ENCODE measurements at regions of chr11 and their contacts with region 1.

Region 1: GRCh38 chr11:113289431-113290187 is 24.8 kb upstream of the TTC12 start:
- DNase-seq: peak; percentile 67
- ATAC-seq: peak; percentile 89

Region 2: DNA sequence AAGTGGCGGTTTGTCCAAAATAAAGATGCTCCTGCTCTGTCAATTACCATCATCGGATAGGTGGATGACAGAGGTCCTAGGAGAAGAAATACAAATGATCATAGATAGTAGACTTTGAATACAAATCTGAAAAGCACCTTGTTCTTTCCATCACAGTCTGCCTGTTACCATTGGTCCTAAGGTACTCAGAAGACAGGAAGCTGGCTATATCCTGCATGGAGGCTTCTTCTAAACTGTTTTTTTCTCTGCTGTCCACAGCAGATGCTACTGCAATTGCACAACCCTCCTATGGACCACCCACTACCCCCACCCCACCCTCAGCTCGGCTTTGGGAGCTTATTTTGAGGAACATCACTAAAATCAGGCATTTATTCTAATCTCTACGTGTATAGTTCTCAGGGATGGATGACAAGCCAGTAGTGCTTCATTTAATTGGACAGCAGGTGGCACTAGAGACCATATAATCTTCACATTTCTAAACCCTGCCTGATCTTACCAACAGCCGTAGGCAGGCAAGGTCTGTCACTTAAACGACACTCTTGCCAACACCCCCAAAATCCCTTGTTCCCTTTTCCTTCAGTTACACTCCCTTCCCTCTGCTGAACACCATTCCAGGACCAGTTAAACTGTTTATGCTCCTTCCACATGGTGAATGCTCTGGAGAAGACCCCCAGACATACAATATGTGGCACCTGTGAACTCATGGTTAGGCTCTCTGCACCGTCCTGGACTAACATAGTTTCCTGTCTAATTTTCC is 1070.0 kb before region 1 on chr11:
- intact Hi-C with region 1: loop called (anchors 10 kb)
- DNase-seq: no peak
- ATAC-seq: peak; percentile 95

Region 3: DNA sequence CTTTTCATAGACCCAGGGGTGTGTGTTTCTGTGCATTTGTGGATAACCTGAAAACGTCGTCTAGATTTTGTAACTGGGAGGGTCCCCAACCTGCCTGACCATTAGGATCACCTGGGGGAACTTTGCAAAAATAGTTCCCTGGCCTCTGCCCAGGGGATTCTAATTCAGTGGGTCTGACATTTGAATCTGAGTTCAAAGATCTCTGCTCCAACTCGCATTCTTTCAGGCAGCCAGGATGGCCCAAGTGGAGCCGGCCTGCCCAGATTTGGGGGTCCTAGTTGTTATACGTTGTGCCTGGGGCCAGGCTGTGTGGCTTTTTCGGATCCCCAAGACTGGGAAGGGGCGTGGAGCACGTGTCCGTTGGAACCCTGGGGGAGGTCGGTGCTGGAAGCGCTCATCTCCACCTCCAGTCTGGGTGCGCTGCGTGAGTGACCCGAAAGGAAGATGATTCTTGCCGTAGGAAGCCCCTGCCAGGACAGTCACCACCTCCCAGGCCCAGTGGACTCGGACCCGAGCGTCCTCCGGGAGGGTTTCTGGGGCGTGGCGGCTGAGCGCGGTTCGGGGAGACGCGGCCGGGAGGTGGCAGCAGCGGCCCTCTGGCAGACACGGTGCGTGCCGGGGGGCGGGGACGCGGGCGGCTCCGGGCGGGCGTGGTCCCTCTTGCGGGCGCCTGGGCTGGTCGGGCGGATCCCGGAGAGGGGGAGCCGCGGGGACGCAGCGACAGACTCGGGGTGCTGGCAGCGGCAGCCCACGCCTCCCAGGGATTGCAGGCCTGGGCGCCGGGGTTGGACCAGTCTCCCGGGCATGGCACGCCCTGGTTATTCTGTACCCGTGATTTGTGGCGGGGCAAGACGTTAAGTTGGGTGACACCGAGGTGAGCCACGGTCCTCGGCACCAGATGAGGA is 999.8 kb before region 1 on chr11:
- intact Hi-C with region 1: loop called (anchors 5 kb)
- DNase-seq: peak; percentile 92
- ATAC-seq: peak; percentile 92

Region 4: DNA sequence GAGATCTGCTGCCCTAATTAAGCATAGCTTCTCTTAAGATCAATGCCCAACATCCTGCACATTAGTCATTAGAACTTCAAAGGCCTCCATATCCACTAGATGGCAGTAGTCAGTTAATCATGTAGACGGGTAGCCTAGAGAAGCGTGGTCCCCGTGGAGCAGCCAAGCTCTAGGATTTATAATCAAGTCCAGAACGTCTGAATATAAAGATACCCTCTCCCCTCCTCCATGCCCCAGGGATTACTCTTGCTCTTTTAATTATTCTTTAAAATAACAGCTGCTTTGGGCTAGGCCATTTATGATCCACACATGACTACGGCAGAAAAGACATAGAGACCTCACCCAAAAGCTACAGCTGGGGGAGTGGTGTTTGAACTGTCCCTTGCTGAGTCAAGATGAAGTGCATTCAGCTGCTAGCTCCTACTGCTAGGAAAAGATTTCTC is 701.3 kb before region 1 on chr11:
- intact Hi-C with region 1: loop called (anchors 5 kb)
- DNase-seq: peak; percentile 72
- ATAC-seq: peak; percentile 94

Region 5: DNA sequence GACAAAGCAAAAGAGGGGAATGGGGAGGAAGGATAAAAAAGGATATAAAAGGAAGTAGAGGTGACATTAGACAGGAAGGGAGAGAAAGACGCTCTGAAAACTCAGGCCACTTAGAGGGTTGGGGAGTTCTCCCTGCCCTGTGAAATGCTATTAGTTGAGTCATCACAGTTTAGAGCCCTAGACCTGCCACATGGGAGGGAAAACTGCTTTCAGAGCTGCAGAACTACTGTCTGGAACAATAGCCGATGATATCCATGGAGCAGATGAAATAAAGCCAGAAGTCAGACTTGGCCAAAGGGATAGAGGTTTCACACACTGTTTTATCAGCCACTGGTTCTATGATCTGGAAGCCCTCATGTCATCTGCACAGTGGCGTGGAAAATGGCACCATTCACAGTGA is 170.5 kb before region 1 on chr11:
- intact Hi-C with region 1: no loop called
- DNase-seq: no peak
- ATAC-seq: peak; percentile 67

Region 6: DNA sequence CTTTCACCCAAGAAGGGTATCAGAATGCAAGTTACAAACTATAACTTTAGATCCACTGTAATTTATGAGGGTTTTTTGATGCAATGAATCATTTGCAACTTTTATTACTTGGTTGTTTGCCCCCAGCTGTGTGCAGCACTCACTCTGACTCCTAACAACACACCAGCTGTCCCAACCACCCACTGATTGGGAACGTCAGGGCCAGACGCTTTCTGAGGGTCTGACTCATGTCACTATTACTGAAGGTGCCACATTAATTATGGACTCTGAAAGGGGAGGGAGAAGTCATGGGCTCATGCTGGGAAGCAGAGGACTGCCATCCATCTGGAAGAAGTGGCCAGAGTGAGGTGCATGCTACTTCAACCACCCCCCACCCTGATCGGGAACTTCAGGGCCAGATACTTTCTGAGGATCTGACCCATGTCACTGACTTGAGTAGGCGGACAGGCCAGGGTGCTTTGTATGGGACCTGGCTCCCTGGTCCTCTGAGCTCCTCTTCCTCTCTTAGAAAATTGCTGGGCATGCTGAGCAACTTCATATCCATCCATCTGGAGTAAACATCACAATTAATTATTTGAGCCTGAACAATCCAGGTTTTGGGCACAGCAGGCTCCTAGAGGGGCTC is 230.5 kb after region 1 on chr11:
- intact Hi-C with region 1: no loop called
- DNase-seq: no peak
- ATAC-seq: no peak